ENCODE measurements at regions of chr22 and their contacts with region 1.

Region 1: GRCh38 chr22:45413368-45414211 is at the starts of genes RIBC2 and SMC1B:
- DNase-seq: peak; percentile 96
- ATAC-seq: peak; percentile 93
- H3K4me3 Mint-ChIP-seq: peak within 1 kb of the TSS; percentile 87
- H3K27ac Mint-ChIP-seq: peak within 1 kb of the TSS; percentile 88
- H3K4me1 Mint-ChIP-seq: peaks cover 24% of the 10 kb centered on the region
- H3K27me3 Mint-ChIP-seq: no peaks in the 10 kb centered on the region
- total RNA-seq, gene RIBC2: 12.8 to 16.2 TPM
- total RNA-seq, gene SMC1B: 0.68 to 2.4 TPM

Region 2: GRCh38 chr22:45318168-45318557 is 95.4 kb before region 1 on chr22:
- CTCF ChIA-PET with region 1: interaction called, 13 read pairs
- DNase-seq: peak; percentile 94
- ATAC-seq: peak; percentile 87
- H3K4me3 Mint-ChIP-seq: peak overlapping the region; percentile 75
- H3K27ac Mint-ChIP-seq: peak overlapping the region; percentile 98
- H3K4me1 Mint-ChIP-seq: peaks cover 64% of the 10 kb centered on the region
- H3K27me3 Mint-ChIP-seq: no peaks in the 10 kb centered on the region

Measured in activated CD8-positive, alpha-beta memory T cell treated with anti-CD3 and anti-CD28 coated beads, Interleukin-2, amount 10 ng/mL, durations not matched to agents 7 days and 5 days (primary cell).